Naive thymus-derived CD4-positive, alpha-beta T cell (primary cell): ENCODE measurements at regions of chr10 and their contacts with region 1.

Region 1: GRCh38 chr10:119650692-119651513 is at the start of gene BAG3:
- DNase-seq: peak; percentile 50 to 84 (median 67)
- ATAC-seq: peak; percentile 88
- H3K4me3 ChIP-seq: peak within 1 kb of the TSS; percentile 83
- H3K4me3 Mint-ChIP-seq: peak within 1 kb of the TSS; percentile 93 to 100 (median 97)
- H3K27ac ChIP-seq: peak within 1 kb of the TSS; percentile 93
- H3K27ac Mint-ChIP-seq: peak within 1 kb of the TSS; percentile 91 to 99 (median 97)
- H3K4me1 ChIP-seq: peaks cover 20 to 29% of the 10 kb centered on the region in 2 donors
- H3K4me1 Mint-ChIP-seq: peaks cover 29 to 48% (median 44%) of the 10 kb centered on the region in 7 donors
- H3K27me3 ChIP-seq: no peaks in the 10 kb centered on the region
- H3K27me3 Mint-ChIP-seq: peaks cover 0 to 2% (median 0%) of the 10 kb centered on the region in 5 donors
- total RNA-seq, gene BAG3: 21.9 to 44.5 (median 23.1) TPM

Region 2: GRCh38 chr10:118698421-118698820 is 952.5 kb before region 1 on chr10:
- CTCF ChIA-PET with region 1: no interaction called
- POLR2A ChIA-PET with region 1: no interaction called
- intact Hi-C with region 1: loop called (anchors 5 kb)
- DNase-seq: peak; percentile 35 to 92 (median 88)
- ATAC-seq: peak; percentile 100
- H3K4me3 ChIP-seq: peak overlapping the region; percentile 18
- H3K4me3 Mint-ChIP-seq: peak overlapping the region; percentile 71 to 93 (median 83)
- H3K27ac ChIP-seq: peak overlapping the region; percentile 57
- H3K27ac Mint-ChIP-seq: peak overlapping the region; percentile 73 to 95 (median 90)
- H3K4me1 ChIP-seq: peaks cover 15 to 40% of the 10 kb centered on the region in 2 donors
- H3K4me1 Mint-ChIP-seq: peaks cover 29 to 89% (median 74%) of the 10 kb centered on the region in 7 donors
- H3K27me3 ChIP-seq: no peaks in the 10 kb centered on the region
- H3K27me3 Mint-ChIP-seq: no peaks in the 10 kb centered on the region

Region 3: GRCh38 chr10:119165171-119166110 is 485.5 kb before region 1 on chr10 and contains the start of gene SFXN4:
- CTCF ChIA-PET with region 1: no interaction called
- POLR2A ChIA-PET with region 1: interaction called, 3 read pairs
- intact Hi-C with region 1: loop called (anchors 1 kb)
- DNase-seq: peak; percentile 72 to 87 (median 84)
- ATAC-seq: peak; percentile 98
- H3K4me3 ChIP-seq: peak within 1 kb of the TSS; percentile 95
- H3K4me3 Mint-ChIP-seq: peak within 1 kb of the TSS; percentile 89 to 95 (median 92)
- H3K27ac ChIP-seq: peak within 1 kb of the TSS; percentile 88
- H3K27ac Mint-ChIP-seq: peak within 1 kb of the TSS; percentile 85 to 98 (median 95)
- H3K4me1 ChIP-seq: peaks cover 12 to 15% of the 10 kb centered on the region in 2 donors
- H3K4me1 Mint-ChIP-seq: peaks cover 22 to 39% (median 32%) of the 10 kb centered on the region in 7 donors
- H3K27me3 ChIP-seq: no peaks in the 10 kb centered on the region
- H3K27me3 Mint-ChIP-seq: no peaks in the 10 kb centered on the region
- total RNA-seq, gene SFXN4: 11.8 to 28.1 (median 23.1) TPM

Region 4: GRCh38 chr10:119199231-119199992 is 451.5 kb before region 1 on chr10:
- CTCF ChIA-PET with region 1: no interaction called
- POLR2A ChIA-PET with region 1: no interaction called
- intact Hi-C with region 1: loop called in 1 of 2 experiments (anchors 2 kb)
- DNase-seq: peak in 8 of 9 donors; percentile 42 to 72 (median 58)
- ATAC-seq: peak; percentile 93
- H3K4me3 ChIP-seq: no peak overlapping the region
- H3K4me3 Mint-ChIP-seq: peak overlapping the region in 1 of 10 donors; percentile 35
- H3K27ac ChIP-seq: no peak overlapping the region
- H3K27ac Mint-ChIP-seq: peak overlapping the region in 3 of 9 donors; percentile 46 to 73 (median 56)
- H3K4me1 ChIP-seq: no peaks in the 10 kb centered on the region
- H3K4me1 Mint-ChIP-seq: peaks cover 4 to 30% (median 9%) of the 10 kb centered on the region in 7 donors
- H3K27me3 ChIP-seq: no peaks in the 10 kb centered on the region
- H3K27me3 Mint-ChIP-seq: peaks cover 0 to 5% (median 0%) of the 10 kb centered on the region in 5 donors

Region 5: DNA sequence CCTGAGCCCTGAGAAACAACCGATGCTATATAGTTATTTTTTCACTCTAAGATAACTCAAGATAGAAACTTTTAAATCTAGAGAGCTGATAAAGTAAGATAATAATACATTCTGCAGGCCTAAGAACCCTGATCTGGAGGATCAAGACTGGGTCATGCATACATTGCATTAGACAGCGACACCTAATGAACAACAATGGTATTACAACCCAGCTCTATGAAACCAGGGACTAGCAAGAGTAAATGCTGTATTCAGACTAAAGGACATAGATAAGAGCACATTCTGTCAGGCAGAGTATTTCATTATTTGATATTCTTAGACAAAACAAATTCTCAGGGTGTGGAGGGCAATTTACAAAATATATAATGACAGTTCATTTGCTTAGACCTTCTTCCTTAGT is 295.0 kb before region 1 on chr10:
- CTCF ChIA-PET with region 1: no interaction called
- POLR2A ChIA-PET with region 1: no interaction called
- intact Hi-C with region 1: no loop called
- DNase-seq: no peak
- ATAC-seq: no peak
- H3K4me3 ChIP-seq: no peak overlapping the region
- H3K4me3 Mint-ChIP-seq: no peak overlapping the region
- H3K27ac ChIP-seq: no peak overlapping the region
- H3K27ac Mint-ChIP-seq: no peak overlapping the region
- H3K4me1 ChIP-seq: no peaks in the 10 kb centered on the region
- H3K4me1 Mint-ChIP-seq: peaks cover 4 to 23% (median 14%) of the 10 kb centered on the region in 7 donors
- H3K27me3 ChIP-seq: no peaks in the 10 kb centered on the region
- H3K27me3 Mint-ChIP-seq: no peaks in the 10 kb centered on the region

Region 6: GRCh38 chr10:119575506-119575905 is 75.4 kb before region 1 on chr10:
- CTCF ChIA-PET with region 1: no interaction called
- POLR2A ChIA-PET with region 1: interaction called, 4 read pairs
- intact Hi-C with region 1: loop called in 1 of 2 experiments (anchors 2 kb)
- DNase-seq: peak in 7 of 9 donors; percentile 46 to 76 (median 60)
- ATAC-seq: peak; percentile 86
- H3K4me3 ChIP-seq: no peak overlapping the region
- H3K4me3 Mint-ChIP-seq: peak overlapping the region in 7 of 10 donors; percentile 10 to 65 (median 27)
- H3K27ac ChIP-seq: peak overlapping the region; percentile 59
- H3K27ac Mint-ChIP-seq: peak overlapping the region; percentile 16 to 91 (median 70)
- H3K4me1 ChIP-seq: peaks cover 12 to 19% of the 10 kb centered on the region in 2 donors
- H3K4me1 Mint-ChIP-seq: peaks cover 8 to 29% (median 20%) of the 10 kb centered on the region in 7 donors
- H3K27me3 ChIP-seq: no peaks in the 10 kb centered on the region
- H3K27me3 Mint-ChIP-seq: no peaks in the 10 kb centered on the region

Region 7: GRCh38 chr10:119608316-119609155 is 42.4 kb before region 1 on chr10:
- CTCF ChIA-PET with region 1: interaction called, 6 read pairs
- POLR2A ChIA-PET with region 1: no interaction called
- intact Hi-C with region 1: loop called in 1 of 2 experiments (anchors 1 kb)
- DNase-seq: peak in 6 of 9 donors; percentile 13 to 33 (median 26)
- ATAC-seq: peak; percentile 57
- H3K4me3 ChIP-seq: no peak overlapping the region
- H3K4me3 Mint-ChIP-seq: peak overlapping the region in 9 of 10 donors; percentile 42 to 67 (median 58)
- H3K27ac ChIP-seq: no peak overlapping the region
- H3K27ac Mint-ChIP-seq: peak overlapping the region in 1 of 9 donors; percentile 54
- H3K4me1 ChIP-seq: no peaks in the 10 kb centered on the region
- H3K4me1 Mint-ChIP-seq: peaks cover 3 to 12% (median 10%) of the 10 kb centered on the region in 7 donors
- H3K27me3 ChIP-seq: no peaks in the 10 kb centered on the region
- H3K27me3 Mint-ChIP-seq: peaks cover 0 to 18% (median 0%) of the 10 kb centered on the region in 5 donors

Region 8: DNA sequence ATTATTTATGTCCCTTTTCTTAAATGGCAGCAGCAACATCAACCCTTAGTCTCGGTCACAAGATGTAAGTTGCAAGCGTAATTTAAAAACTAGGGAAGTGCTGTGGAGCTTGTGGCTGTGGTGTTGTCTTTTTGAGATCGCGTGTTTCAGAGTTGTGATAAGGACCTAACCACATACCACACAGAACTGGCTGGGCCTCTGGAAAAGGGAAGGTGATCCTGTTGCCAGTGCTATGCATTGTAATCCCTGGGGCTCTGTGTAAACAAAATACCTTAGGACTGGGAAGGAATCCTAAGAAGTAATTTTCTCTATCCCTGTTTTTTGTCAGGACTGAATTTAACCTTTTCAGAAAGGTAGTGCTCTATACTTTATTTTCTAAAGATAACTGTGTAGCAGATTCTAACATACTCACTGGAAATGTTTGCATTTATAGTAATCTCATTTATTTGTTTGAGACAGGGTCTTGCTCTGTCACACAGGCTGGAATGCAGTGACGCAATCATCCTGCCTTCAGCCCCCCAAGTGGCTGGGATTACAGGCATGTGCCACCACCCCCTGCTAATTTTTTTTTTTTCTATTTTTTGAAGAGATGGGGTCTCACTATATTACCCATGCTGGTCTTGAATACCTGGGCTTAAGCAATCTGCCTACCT is 135.3 kb after region 1 on chr10:
- CTCF ChIA-PET with region 1: no interaction called
- POLR2A ChIA-PET with region 1: no interaction called
- intact Hi-C with region 1: no loop called
- DNase-seq: no peak
- ATAC-seq: peak; percentile 67
- H3K4me3 ChIP-seq: no peak overlapping the region
- H3K4me3 Mint-ChIP-seq: no peak overlapping the region
- H3K27ac ChIP-seq: no peak overlapping the region
- H3K27ac Mint-ChIP-seq: no peak overlapping the region
- H3K4me1 ChIP-seq: peaks cover 0 to 9% of the 10 kb centered on the region in 2 donors
- H3K4me1 Mint-ChIP-seq: peaks cover 19 to 51% (median 36%) of the 10 kb centered on the region in 7 donors
- H3K27me3 ChIP-seq: no peaks in the 10 kb centered on the region
- H3K27me3 Mint-ChIP-seq: no peaks in the 10 kb centered on the region

Region 9: DNA sequence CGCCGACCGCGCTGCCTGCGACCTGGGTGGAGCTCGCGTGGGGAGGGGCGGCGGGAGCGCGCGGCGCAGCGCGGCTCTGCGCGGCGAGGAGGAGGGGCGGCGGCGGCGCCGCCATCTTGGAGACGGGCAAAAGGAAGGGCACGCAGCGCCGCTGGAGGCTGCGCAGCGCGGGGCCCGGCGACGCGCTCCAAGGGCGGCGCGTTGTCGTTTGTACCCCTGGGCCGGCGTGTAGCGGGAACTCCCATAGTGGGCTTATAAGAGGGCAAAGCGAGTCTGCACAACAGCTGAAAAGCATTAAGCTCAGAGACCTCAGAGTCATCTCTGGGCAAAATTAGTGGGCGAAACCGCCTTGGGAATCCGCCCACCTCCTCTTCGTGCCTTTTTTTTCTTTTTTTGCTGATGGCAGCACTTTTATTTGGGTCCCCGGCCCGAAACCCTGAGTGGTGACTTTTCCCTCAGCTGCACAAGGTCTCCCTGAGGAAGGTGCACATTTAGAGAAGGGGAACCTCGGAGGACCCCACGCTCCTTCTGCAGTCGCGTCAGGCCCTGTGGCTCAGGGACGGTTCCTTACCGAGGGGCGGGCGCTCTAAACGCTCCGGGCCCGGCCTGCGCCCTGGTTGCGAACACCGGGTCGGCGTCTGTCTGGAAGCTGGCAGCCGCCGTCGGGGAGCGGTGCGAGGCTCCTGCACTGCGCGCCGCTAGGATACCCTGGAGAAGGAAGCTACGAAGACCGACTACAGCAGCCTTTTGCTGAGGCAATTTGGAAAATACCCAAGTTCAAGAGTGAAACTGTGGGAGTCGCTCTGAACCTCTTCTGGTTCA is 222.2 kb after region 1 on chr10:
- CTCF ChIA-PET with region 1: interaction called, 3 read pairs
- POLR2A ChIA-PET with region 1: interaction called, 5 read pairs
- intact Hi-C with region 1: loop called (anchors 1 to 2 kb)
- DNase-seq: peak; percentile 81 to 88 (median 86)
- ATAC-seq: peak; percentile 96
- H3K4me3 ChIP-seq: peak overlapping the region; percentile 97
- H3K4me3 Mint-ChIP-seq: peak overlapping the region; percentile 82 to 92 (median 89)
- H3K27ac ChIP-seq: peak overlapping the region; percentile 84
- H3K27ac Mint-ChIP-seq: peak overlapping the region; percentile 79 to 95 (median 92)
- H3K4me1 ChIP-seq: peaks cover 21 to 28% of the 10 kb centered on the region in 2 donors
- H3K4me1 Mint-ChIP-seq: peaks cover 23 to 46% (median 41%) of the 10 kb centered on the region in 7 donors
- H3K27me3 ChIP-seq: no peaks in the 10 kb centered on the region
- H3K27me3 Mint-ChIP-seq: peaks cover 0 to 6% (median 0%) of the 10 kb centered on the region in 5 donors